Mammary epithelial cell (primary cell): ENCODE measurements at regions of chr4 and their contacts with region 1.

Region 1: GRCh38 chr4:127782274-127783025 is at the start of gene HSPA4L:
- DNase-seq: no peak
- H3K4me3 ChIP-seq: peak within 1 kb of the TSS; percentile 83 to 96 (median 85)
- H3K27ac ChIP-seq: peak within 1 kb of the TSS; percentile 100
- H3K4me1 ChIP-seq: peaks cover 9% of the 10 kb centered on the region
- H3K27me3 ChIP-seq: no peaks in the 10 kb centered on the region
- CTCF ChIP-seq: peak in 1 of 2 donors; percentile 35
- total RNA-seq, gene HSPA4L: 40.7 to 65.3 TPM

Region 2: GRCh38 chr4:127347936-127348335 is 434.5 kb before region 1 on chr4:
- CTCF ChIA-PET with region 1: no interaction called
- dilution Hi-C with region 1: no loop called
- in situ Hi-C with region 1: no loop called
- intact Hi-C with region 1: no loop called
- DNase-seq: no peak
- H3K4me3 ChIP-seq: no peak overlapping the region
- H3K27ac ChIP-seq: no peak overlapping the region
- H3K4me1 ChIP-seq: no peaks in the 10 kb centered on the region
- H3K27me3 ChIP-seq: no peaks in the 10 kb centered on the region
- CTCF ChIP-seq: no peak

Region 3: GRCh38 chr4:127622921-127623656 is 159.4 kb before region 1 on chr4:
- CTCF ChIA-PET with region 1: no interaction called
- dilution Hi-C with region 1: no loop called
- in situ Hi-C with region 1: no loop called
- intact Hi-C with region 1: loop called (anchors 5 kb)
- DNase-seq: peak; percentile 64
- H3K4me3 ChIP-seq: peak overlapping the region; percentile 82 to 91 (median 85)
- H3K27ac ChIP-seq: peak overlapping the region; percentile 47
- H3K4me1 ChIP-seq: no peaks in the 10 kb centered on the region
- H3K27me3 ChIP-seq: no peaks in the 10 kb centered on the region
- CTCF ChIP-seq: peak; percentile 5 to 46

Region 4: DNA sequence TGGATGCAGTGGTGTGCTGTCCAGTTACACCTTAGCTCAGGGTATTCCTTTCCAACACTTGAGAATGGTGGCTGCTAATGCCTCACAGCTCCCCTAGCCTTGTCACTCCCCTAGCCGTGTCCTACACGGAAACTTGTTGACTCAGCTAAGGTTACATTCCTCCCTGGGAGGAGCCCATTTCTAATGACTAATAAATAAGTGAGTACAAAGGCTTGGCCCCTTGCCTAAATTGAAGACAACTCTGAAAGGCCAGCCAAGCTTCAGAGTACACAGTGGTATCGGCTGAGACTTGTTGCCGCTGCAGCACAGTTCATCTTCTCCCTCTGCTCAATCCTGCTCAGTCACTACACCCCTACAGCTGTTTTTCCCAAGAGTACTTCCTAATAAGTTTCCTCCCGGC is 73.5 kb before region 1 on chr4:
- CTCF ChIA-PET with region 1: no interaction called
- dilution Hi-C with region 1: no loop called
- in situ Hi-C with region 1: no loop called
- intact Hi-C with region 1: no loop called
- DNase-seq: peak; percentile 98
- H3K4me3 ChIP-seq: peak overlapping the region; percentile 26 to 45 (median 26)
- H3K27ac ChIP-seq: peak overlapping the region; percentile 95
- H3K4me1 ChIP-seq: peaks cover 5% of the 10 kb centered on the region
- H3K27me3 ChIP-seq: no peaks in the 10 kb centered on the region
- CTCF ChIP-seq: no peak

Region 5: DNA sequence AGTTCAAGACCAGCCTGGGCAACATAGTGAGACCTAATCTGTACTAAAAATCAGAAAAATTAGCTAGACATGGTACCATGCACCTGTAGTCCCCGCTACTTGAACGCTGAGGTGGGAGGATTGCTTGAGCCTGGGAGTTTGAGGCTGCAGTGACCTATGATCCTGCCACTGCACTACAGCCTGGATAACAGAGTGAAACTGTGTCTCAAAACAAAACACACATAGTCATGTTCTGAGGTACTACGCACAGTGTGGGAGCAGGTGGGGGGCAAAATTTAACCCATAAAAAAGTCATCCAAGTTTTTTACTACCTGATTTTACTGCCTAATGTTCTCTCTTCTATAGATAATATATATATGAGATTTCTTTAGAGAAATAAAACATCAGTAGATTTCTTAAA is 28.1 kb after region 1 on chr4:
- CTCF ChIA-PET with region 1: no interaction called
- dilution Hi-C with region 1: no loop called
- in situ Hi-C with region 1: no loop called
- intact Hi-C with region 1: no loop called
- DNase-seq: no peak
- H3K4me3 ChIP-seq: no peak overlapping the region
- H3K27ac ChIP-seq: no peak overlapping the region
- H3K4me1 ChIP-seq: no peaks in the 10 kb centered on the region
- H3K27me3 ChIP-seq: no peaks in the 10 kb centered on the region
- CTCF ChIP-seq: no peak

Region 6: DNA sequence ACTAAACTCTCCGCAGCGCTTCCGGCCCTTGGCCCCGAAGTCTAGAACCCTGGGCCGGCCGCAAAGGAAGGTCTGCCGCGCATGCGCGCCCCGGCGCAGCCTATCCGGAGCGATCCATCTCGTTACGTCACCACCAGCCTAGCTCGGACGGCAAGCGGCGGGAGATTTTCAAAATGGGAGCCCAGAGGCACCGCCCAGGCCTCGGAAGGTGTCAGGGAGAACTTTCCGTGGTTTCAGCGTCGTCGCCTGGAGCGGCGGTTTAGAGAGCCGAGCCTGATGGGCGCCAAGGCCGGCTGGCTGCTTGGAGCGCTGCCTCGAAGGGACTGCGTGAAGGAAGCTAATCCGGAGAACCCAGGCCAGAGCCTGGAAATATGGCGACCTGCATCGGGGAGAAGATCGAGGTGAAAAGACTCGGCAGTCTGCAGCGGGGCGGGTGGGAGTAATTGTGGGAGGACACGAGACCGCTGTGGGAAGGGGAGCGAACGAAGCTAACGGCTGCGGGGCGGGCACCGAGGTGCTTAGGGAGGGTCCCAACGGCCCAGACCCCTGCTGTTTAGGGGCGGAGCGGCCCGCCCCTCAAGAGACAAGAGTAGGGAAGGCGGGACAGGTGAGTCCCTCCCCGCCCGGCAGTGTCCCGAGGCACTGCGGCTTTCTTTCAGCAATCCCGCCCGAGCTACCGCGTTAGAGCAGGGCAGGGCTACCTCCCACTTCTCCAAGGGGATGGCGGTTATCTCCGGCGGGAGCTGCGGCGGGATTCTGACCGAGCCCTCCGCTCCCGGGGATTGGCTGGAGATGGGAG is 98.5 kb after region 1 on chr4 and contains the start of gene PLK4:
- CTCF ChIA-PET with region 1: no interaction called
- dilution Hi-C with region 1: no loop called
- in situ Hi-C with region 1: no loop called
- intact Hi-C with region 1: loop called (anchors 1 kb)
- DNase-seq: peak; percentile 93
- H3K4me3 ChIP-seq: peak within 1 kb of the TSS; percentile 91 to 96 (median 94)
- H3K27ac ChIP-seq: peak within 1 kb of the TSS; percentile 95
- H3K4me1 ChIP-seq: no peaks in the 10 kb centered on the region
- H3K27me3 ChIP-seq: no peaks in the 10 kb centered on the region
- CTCF ChIP-seq: no peak
- total RNA-seq, gene PLK4: 2.8 to 15.2 TPM

Region 7: DNA sequence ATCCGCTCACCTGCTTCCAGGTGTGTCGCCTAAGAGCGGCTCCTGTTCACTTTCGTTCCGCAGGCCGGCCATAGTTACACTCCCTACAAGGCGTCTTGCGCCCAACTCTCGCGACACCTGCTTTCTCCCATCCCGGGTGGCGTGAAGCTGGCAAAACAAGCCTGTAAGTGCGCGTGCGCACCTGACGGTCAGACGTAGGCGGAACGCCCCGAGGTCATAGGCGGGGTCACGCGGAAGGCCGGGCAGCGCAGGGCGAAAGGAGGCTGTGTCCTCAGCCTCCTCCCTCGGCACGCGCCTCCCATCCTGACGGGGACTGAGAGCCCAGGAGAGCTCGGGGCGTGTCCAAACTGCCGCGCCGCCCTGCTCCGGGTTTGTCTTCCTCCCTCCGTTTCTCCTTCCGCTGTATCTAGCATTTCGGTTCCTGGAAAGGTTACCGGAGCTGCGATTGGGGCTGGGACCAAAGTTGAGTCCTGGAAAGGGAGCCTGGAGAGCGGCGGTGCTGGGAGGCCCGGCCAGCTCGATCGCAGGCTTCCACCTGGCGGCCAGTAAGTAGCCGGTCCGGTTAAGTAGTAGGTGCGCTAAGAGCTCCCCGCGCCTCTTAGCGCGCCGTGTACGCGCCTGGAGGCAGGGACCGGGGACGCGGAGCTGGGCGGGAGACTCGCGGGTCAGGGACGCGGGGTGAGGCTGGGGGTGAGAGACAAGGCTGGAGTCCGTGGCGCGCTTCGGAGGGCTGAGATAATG is 182.8 kb after region 1 on chr4 and contains the starts of genes ABHD18 and MFSD8:
- CTCF ChIA-PET with region 1: no interaction called
- dilution Hi-C with region 1: no loop called
- in situ Hi-C with region 1: no loop called
- intact Hi-C with region 1: loop called (anchors 1 kb)
- DNase-seq: peak; percentile 99
- H3K4me3 ChIP-seq: peak within 1 kb of the TSS; percentile 60 to 97 (median 88)
- H3K27ac ChIP-seq: peak within 1 kb of the TSS; percentile 87
- H3K4me1 ChIP-seq: peaks cover 10% of the 10 kb centered on the region
- H3K27me3 ChIP-seq: no peaks in the 10 kb centered on the region
- CTCF ChIP-seq: peak in 1 of 2 donors; percentile 58
- total RNA-seq, gene ABHD18: 6.3 to 7.7 TPM
- total RNA-seq, gene MFSD8: 23.3 to 28.0 TPM

Region 8: DNA sequence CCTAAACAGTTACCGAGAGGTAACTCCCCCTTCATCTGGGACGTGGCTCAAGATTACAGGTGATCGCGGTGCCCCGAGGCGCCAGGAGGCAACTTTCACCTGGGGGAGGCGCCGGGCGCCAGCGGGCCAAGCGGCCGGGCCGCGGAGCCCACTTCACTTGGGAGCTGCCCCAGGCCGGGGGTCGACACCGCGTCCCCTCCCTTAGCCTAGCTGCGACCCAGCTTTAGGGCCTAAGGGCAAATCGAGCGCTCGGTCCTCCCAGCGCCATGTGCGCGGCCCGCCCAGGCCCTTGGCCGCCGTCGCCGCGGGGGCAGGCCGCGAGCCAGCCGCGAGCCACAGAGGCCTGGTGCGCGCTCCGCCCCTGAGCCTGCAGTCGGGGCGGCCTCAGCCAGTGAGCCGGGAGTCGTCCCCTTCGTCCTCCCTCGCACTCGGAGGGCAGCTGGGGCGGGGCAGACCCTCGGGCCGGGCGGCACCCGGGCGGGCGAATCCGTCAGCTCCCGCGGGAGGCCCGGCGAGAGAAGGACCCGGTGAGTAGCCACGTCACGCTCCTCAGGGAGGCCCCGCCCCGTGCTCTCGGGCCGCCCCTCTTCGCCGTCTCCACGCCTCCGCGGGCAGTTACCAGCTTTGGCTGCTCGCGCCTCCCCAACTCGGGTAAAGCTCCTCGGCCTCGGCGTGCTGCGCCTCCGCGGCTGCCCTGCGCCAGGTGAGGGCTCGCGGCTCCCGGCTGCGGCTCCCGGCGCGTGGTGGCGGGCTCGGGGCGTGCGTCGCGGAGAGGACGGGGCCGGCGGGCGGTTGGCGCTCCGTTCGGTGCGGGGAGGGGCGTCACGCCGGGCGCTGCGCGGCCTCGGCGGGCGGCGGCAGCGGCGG is 278.5 kb after region 1 on chr4 and contains the start of gene LARP1B:
- CTCF ChIA-PET with region 1: no interaction called
- dilution Hi-C with region 1: no loop called
- in situ Hi-C with region 1: no loop called
- intact Hi-C with region 1: loop called (anchors 2 kb)
- DNase-seq: peak; percentile 98
- H3K4me3 ChIP-seq: peak within 1 kb of the TSS; percentile 81 to 97 (median 97)
- H3K27ac ChIP-seq: peak within 1 kb of the TSS; percentile 90
- H3K4me1 ChIP-seq: no peaks in the 10 kb centered on the region
- H3K27me3 ChIP-seq: no peaks in the 10 kb centered on the region
- CTCF ChIP-seq: no peak
- total RNA-seq, gene LARP1B: 15.3 to 27.0 TPM

Region 9: DNA sequence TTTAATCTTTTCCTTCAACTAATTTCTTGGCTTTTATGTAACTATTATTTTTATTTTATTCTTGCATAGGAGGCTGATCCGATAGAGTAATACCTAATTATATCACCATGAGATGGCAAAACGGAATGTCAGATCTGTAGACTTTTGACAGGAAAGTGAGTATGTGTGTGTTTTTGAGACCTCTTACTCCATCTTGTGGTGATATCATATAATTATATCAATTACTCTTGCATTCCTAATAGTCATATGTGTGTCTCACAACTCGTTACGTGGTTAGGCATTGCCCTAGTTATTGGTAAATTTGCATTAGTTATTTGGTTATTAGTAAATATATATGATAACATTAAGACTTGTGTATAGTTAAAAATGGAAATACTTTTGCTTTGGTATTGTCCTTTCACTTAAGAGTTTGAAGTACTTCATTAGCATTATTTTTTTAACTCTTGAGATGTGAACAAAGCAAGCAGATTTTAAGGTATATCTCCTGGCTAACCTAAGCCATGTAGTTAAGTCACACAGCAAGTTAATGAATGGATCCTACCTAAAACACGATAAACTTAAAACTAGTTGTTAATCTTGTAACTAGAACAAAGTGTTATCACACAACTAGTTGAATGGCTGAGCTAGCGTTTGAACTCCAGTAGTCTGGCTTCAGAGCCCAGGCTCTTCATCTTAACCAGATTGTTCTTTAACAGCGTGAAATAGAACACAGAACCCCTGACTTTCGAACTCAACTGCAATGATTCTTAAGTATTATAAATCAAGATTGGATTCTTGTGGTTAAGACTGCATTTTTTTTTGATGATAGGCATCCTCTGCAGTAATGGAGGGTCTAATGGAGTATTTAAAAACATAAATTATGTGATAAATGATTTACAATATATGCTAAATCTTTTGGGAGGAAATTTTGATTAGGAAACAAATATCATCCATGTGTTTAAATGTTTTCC is 438.1 kb after region 1 on chr4:
- CTCF ChIA-PET with region 1: no interaction called
- dilution Hi-C with region 1: no loop called
- in situ Hi-C with region 1: no loop called
- intact Hi-C with region 1: loop called (anchors 5 kb)
- DNase-seq: peak; percentile 42
- H3K4me3 ChIP-seq: no peak overlapping the region
- H3K27ac ChIP-seq: no peak overlapping the region
- H3K4me1 ChIP-seq: peaks cover 6% of the 10 kb centered on the region
- H3K27me3 ChIP-seq: no peaks in the 10 kb centered on the region
- CTCF ChIP-seq: peak; percentile 23 to 39